CD8-positive, alpha-beta T cell (primary cell): ENCODE measurements at regions of chr3 and their contacts with region 1.

Region 1: DNA sequence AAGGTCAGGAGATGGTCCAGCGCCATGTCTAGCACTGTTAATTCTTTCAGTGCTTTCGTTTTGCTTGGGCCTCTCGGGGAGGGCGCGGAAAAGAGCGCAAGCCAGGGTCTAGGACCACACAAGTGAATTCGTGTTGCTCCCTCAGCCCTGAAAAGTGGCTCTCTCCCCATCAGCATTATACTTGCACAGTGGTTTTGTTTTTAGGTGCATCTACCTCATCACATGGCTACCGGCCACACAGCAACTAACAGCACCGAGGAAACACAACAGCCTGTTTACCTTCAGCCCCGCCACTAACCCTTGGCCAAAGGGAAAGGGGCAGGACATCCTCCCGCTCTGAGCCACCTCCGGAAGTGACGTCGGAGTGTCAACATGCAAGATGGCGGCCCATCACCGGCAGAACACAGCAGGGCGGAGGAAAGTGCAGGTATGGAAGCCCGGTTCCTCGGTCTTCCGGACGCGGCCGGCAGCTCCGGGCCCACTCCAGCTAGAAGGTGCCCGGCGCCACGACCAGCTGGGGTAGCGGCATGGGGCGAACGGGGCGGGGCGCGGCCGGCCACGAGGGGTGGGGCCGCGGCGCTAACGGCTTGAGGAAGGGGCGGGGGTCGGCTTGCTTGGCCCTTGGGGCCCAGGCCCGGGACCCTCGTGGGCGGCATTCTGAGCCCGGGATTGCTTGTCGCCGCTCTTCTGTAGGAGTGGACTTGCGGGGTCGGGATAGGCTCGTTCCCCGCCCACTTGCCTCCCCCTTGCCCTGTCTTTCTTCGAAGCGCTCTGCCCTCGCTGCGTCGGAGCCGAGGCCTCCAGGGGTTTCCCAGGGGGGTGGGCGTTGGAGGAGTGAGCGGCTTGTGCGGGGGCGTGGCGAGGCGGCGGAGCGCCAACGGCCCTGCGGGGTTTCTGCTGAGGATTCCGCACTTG is at the starts of genes SCN11A and WDR48:
- DNase-seq: peak; percentile 82 to 97 (median 94)
- ATAC-seq: peak; percentile 88
- H3K4me3 ChIP-seq: peak within 1 kb of the TSS; percentile 59 to 70
- H3K4me3 Mint-ChIP-seq: peak within 1 kb of the TSS; percentile 98
- H3K27ac ChIP-seq: peak within 1 kb of the TSS; percentile 83 to 91
- H3K27ac Mint-ChIP-seq: peak within 1 kb of the TSS; percentile 98
- H3K4me1 ChIP-seq: peaks cover 16% of the 10 kb centered on the region
- H3K4me1 Mint-ChIP-seq: peaks cover 67% of the 10 kb centered on the region
- H3K27me3 ChIP-seq: no peaks in the 10 kb centered on the region
- H3K27me3 Mint-ChIP-seq: no peaks in the 10 kb centered on the region
- CTCF ChIP-seq: no peak
- total RNA-seq, gene SCN11A: 0.08 to 0.11 TPM
- total RNA-seq, gene WDR48: 102 to 103 TPM

Region 2: GRCh38 chr3:38039101-38039898 is 1012.6 kb before region 1 on chr3 and contains the start of gene DLEC1:
- CTCF ChIA-PET with region 1: no interaction called
- POLR2A ChIA-PET with region 1: no interaction called
- intact Hi-C with region 1: loop called in 1 of 2 experiments (anchors 2 kb)
- DNase-seq: peak; percentile 61 to 95 (median 86)
- ATAC-seq: peak; percentile 61
- H3K4me3 ChIP-seq: peak within 1 kb of the TSS; percentile 65 to 67
- H3K4me3 Mint-ChIP-seq: peak within 1 kb of the TSS; percentile 83
- H3K27ac ChIP-seq: peak within 1 kb of the TSS; percentile 62 to 90
- H3K27ac Mint-ChIP-seq: peak within 1 kb of the TSS; percentile 96
- H3K4me1 ChIP-seq: peaks cover 25% of the 10 kb centered on the region
- H3K4me1 Mint-ChIP-seq: peaks cover 27% of the 10 kb centered on the region
- H3K27me3 ChIP-seq: no peaks in the 10 kb centered on the region
- H3K27me3 Mint-ChIP-seq: no peaks in the 10 kb centered on the region
- CTCF ChIP-seq: no peak
- total RNA-seq, gene DLEC1: 1.8 to 1.9 TPM

Region 3: GRCh38 chr3:38164966-38165680 is 886.8 kb before region 1 on chr3 and contains the start of gene OXSR1:
- CTCF ChIA-PET with region 1: no interaction called
- POLR2A ChIA-PET with region 1: no interaction called
- intact Hi-C with region 1: loop called in 1 of 2 experiments (anchors 10 kb)
- DNase-seq: peak; percentile 91 to 100 (median 97)
- ATAC-seq: peak; percentile 89
- H3K4me3 ChIP-seq: peak within 1 kb of the TSS; percentile 76 to 84
- H3K4me3 Mint-ChIP-seq: peak within 1 kb of the TSS; percentile 91
- H3K27ac ChIP-seq: peak within 1 kb of the TSS; percentile 94 to 99
- H3K27ac Mint-ChIP-seq: peak within 1 kb of the TSS; percentile 100
- H3K4me1 ChIP-seq: peaks cover 23% of the 10 kb centered on the region
- H3K4me1 Mint-ChIP-seq: peaks cover 46% of the 10 kb centered on the region
- H3K27me3 ChIP-seq: no peaks in the 10 kb centered on the region
- H3K27me3 Mint-ChIP-seq: no peaks in the 10 kb centered on the region
- CTCF ChIP-seq: no peak
- total RNA-seq, gene OXSR1: 45.4 to 45.6 TPM

Region 4: GRCh38 chr3:38746641-38747040 is 305.3 kb before region 1 on chr3:
- CTCF ChIA-PET with region 1: no interaction called
- POLR2A ChIA-PET with region 1: no interaction called
- intact Hi-C with region 1: no loop called
- DNase-seq: no peak
- ATAC-seq: no peak
- H3K4me3 ChIP-seq: no peak overlapping the region
- H3K4me3 Mint-ChIP-seq: no peak overlapping the region
- H3K27ac ChIP-seq: no peak overlapping the region
- H3K27ac Mint-ChIP-seq: no peak overlapping the region
- H3K4me1 ChIP-seq: no peaks in the 10 kb centered on the region
- H3K4me1 Mint-ChIP-seq: no peaks in the 10 kb centered on the region
- H3K27me3 ChIP-seq: no peaks in the 10 kb centered on the region
- H3K27me3 Mint-ChIP-seq: peaks cover 14% of the 10 kb centered on the region
- CTCF ChIP-seq: no peak

Region 5: DNA sequence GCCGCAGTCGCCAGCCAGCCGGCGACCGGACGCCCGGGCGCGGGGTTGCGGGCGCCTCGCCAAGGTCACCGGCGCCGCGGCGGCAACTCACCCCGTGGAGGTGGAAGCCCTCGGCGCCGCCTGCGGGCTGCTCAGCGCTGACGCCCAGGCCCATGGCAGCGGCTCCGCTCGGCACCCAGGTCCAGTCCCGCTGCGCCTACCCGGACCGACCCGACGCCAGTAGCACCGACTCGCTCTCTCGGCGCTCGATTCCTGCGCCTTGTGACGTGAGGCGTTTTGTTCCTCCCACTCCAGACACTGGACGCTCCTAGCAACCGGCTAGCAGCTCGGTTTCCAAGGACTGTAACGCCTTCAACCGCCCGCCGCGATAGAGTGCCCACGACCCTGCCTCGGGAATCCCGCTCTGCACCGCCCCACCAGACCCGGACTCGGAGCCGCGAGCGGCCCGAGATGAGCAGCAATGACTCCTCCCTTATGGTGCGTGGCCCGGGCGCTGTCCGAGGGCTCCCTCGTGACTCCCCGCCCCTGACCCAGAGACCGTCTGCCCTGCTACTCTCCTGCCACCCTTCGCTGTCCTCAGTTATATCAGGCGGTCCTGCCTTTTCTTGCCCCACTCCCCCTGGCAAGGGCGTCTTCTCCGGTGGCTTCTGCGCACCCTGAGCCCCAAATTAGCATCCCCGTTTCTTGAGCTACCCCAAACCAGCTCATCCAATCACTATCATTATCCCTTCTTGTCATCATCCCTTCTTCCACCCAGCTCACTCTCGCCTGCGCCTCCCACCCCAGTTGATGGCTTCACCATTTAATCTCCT is 55.7 kb after region 1 on chr3 and contains the starts of genes GORASP1 and TTC21A:
- CTCF ChIA-PET with region 1: no interaction called
- POLR2A ChIA-PET with region 1: interaction called, 3 read pairs
- intact Hi-C with region 1: loop called in 1 of 2 experiments (anchors 5 kb)
- DNase-seq: peak; percentile 16 to 83 (median 62)
- ATAC-seq: peak; percentile 61
- H3K4me3 ChIP-seq: peak within 1 kb of the TSS; percentile 75 to 95
- H3K4me3 Mint-ChIP-seq: peak within 1 kb of the TSS; percentile 90
- H3K27ac ChIP-seq: peak within 1 kb of the TSS in 1 of 2 experiments; percentile 69
- H3K27ac Mint-ChIP-seq: peak within 1 kb of the TSS; percentile 87
- H3K4me1 ChIP-seq: peaks cover 29% of the 10 kb centered on the region
- H3K4me1 Mint-ChIP-seq: peaks cover 49% of the 10 kb centered on the region
- H3K27me3 ChIP-seq: no peaks in the 10 kb centered on the region
- H3K27me3 Mint-ChIP-seq: no peaks in the 10 kb centered on the region
- CTCF ChIP-seq: no peak
- total RNA-seq, gene GORASP1: 13.9 to 20.2 TPM
- total RNA-seq, gene TTC21A: 1.8 to 2.3 TPM

Region 6: GRCh38 chr3:39383045-39383880 is 331.4 kb after region 1 on chr3 and contains the start of gene SLC25A38:
- CTCF ChIA-PET with region 1: no interaction called
- POLR2A ChIA-PET with region 1: no interaction called
- intact Hi-C with region 1: loop called (anchors 1 to 5 kb)
- DNase-seq: peak; percentile 58 to 93 (median 78)
- ATAC-seq: peak; percentile 79
- H3K4me3 ChIP-seq: peak within 1 kb of the TSS; percentile 81 to 98
- H3K4me3 Mint-ChIP-seq: peak within 1 kb of the TSS; percentile 99
- H3K27ac ChIP-seq: peak within 1 kb of the TSS; percentile 91 to 97
- H3K27ac Mint-ChIP-seq: peak within 1 kb of the TSS; percentile 98
- H3K4me1 ChIP-seq: peaks cover 43% of the 10 kb centered on the region
- H3K4me1 Mint-ChIP-seq: peaks cover 50% of the 10 kb centered on the region
- H3K27me3 ChIP-seq: no peaks in the 10 kb centered on the region
- H3K27me3 Mint-ChIP-seq: no peaks in the 10 kb centered on the region
- CTCF ChIP-seq: peak; percentile 39
- total RNA-seq, gene SLC25A38: 64.0 to 65.1 TPM

Region 7: GRCh38 chr3:40054568-40055222 is 1002.8 kb after region 1 on chr3:
- CTCF ChIA-PET with region 1: no interaction called
- POLR2A ChIA-PET with region 1: no interaction called
- intact Hi-C with region 1: no loop called
- DNase-seq: no peak
- ATAC-seq: no peak
- H3K4me3 ChIP-seq: no peak overlapping the region
- H3K4me3 Mint-ChIP-seq: no peak overlapping the region
- H3K27ac ChIP-seq: no peak overlapping the region
- H3K27ac Mint-ChIP-seq: no peak overlapping the region
- H3K4me1 ChIP-seq: no peaks in the 10 kb centered on the region
- H3K4me1 Mint-ChIP-seq: no peaks in the 10 kb centered on the region
- H3K27me3 ChIP-seq: no peaks in the 10 kb centered on the region
- H3K27me3 Mint-ChIP-seq: no peaks in the 10 kb centered on the region
- CTCF ChIP-seq: no peak